Naive thymus-derived CD4-positive, alpha-beta T cell (primary cell): ENCODE measurements at regions of chr7 and their contacts with region 1.

Region 1: DNA sequence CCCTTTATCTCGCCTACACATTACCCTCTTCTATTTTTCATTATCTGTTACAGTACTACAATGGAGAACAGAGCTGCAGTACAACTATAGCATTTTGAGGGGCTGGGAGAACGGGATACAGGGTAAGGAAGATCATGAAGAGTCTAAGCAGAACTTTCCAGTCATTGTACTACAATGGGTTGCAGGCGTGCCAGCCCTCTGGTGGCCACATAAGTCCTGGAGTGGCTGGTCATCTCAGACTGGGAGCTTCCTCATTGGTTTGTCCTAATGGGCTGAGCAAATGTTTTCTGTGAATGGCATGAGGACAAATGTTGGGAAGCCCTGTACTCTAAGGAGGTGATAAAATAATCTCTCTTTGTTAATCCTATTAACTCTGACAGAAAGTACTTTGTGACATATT is 33.0 kb downstream of the TMEM106B start:
- DNase-seq: no peak
- ATAC-seq: no peak
- H3K4me3 ChIP-seq: no peak overlapping the region
- H3K4me3 Mint-ChIP-seq: no peak overlapping the region
- H3K27ac ChIP-seq: no peak overlapping the region
- H3K27ac Mint-ChIP-seq: no peak overlapping the region
- H3K4me1 ChIP-seq: no peaks in the 10 kb centered on the region
- H3K4me1 Mint-ChIP-seq: peaks cover 8 to 18% (median 15%) of the 10 kb centered on the region in 7 donors
- H3K27me3 ChIP-seq: no peaks in the 10 kb centered on the region
- H3K27me3 Mint-ChIP-seq: peaks cover 0 to 3% (median 0%) of the 10 kb centered on the region in 5 donors

Region 2: GRCh38 chr7:12119620-12120303 is 124.4 kb before region 1 on chr7:
- CTCF ChIA-PET with region 1: no interaction called
- POLR2A ChIA-PET with region 1: no interaction called
- intact Hi-C with region 1: no loop called
- DNase-seq: no peak
- ATAC-seq: no peak
- H3K4me3 ChIP-seq: no peak overlapping the region
- H3K4me3 Mint-ChIP-seq: no peak overlapping the region
- H3K27ac ChIP-seq: no peak overlapping the region
- H3K27ac Mint-ChIP-seq: no peak overlapping the region
- H3K4me1 ChIP-seq: no peaks in the 10 kb centered on the region
- H3K4me1 Mint-ChIP-seq: peaks cover 0 to 5% (median 0%) of the 10 kb centered on the region in 7 donors
- H3K27me3 ChIP-seq: no peaks in the 10 kb centered on the region
- H3K27me3 Mint-ChIP-seq: peaks cover 0 to 16% (median 2%) of the 10 kb centered on the region in 5 donors

Region 3: GRCh38 chr7:12152196-12152918 is 91.8 kb before region 1 on chr7:
- CTCF ChIA-PET with region 1: no interaction called
- POLR2A ChIA-PET with region 1: no interaction called
- intact Hi-C with region 1: no loop called
- DNase-seq: no peak
- ATAC-seq: no peak
- H3K4me3 ChIP-seq: no peak overlapping the region
- H3K4me3 Mint-ChIP-seq: no peak overlapping the region
- H3K27ac ChIP-seq: no peak overlapping the region
- H3K27ac Mint-ChIP-seq: no peak overlapping the region
- H3K4me1 ChIP-seq: no peaks in the 10 kb centered on the region
- H3K4me1 Mint-ChIP-seq: peaks cover 0 to 8% (median 6%) of the 10 kb centered on the region in 7 donors
- H3K27me3 ChIP-seq: peaks cover 0 to 3% of the 10 kb centered on the region in 2 donors
- H3K27me3 Mint-ChIP-seq: peaks cover 0 to 14% (median 7%) of the 10 kb centered on the region in 5 donors

Region 4: DNA sequence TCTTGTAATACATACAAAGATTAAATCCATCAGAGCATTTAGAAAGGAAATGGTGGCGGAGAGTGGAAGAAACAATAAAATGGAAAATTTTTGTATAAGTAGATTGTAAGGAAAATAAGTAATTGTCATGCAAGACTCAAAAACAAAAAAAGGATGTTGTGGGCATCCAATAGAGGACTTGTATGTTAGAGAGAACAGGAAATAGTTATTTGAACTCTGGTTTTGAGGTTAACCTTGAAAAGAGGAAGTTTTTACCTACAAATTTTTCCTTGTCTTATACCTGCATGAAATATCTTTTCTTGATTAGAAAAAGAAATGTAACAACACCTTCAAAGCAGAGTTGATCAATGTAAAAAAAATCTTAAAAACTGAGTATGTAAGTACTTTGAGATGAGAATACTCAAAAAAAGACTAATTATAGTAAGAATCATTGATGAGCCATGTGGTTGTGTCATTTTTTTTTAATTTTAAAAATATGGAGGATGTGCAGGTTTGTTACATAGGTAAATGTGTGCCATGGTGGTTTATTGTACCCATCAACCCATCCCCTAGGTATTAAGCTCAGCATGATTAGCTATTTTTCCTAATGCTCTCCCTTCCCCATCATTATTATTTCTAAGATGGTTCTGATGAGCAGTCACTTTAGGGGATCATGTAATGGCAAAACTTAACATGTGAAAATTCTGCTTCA is 21.1 kb before region 1 on chr7:
- CTCF ChIA-PET with region 1: no interaction called
- POLR2A ChIA-PET with region 1: no interaction called
- intact Hi-C with region 1: loop called in 1 of 2 experiments (anchors 2 kb)
- DNase-seq: peak in 7 of 9 donors; percentile 41 to 72 (median 61)
- ATAC-seq: peak; percentile 87
- H3K4me3 ChIP-seq: no peak overlapping the region
- H3K4me3 Mint-ChIP-seq: peak overlapping the region; percentile 51 to 79 (median 66)
- H3K27ac ChIP-seq: peak overlapping the region; percentile 29
- H3K27ac Mint-ChIP-seq: peak overlapping the region; percentile 64 to 87 (median 84)
- H3K4me1 ChIP-seq: peaks cover 18 to 31% of the 10 kb centered on the region in 2 donors
- H3K4me1 Mint-ChIP-seq: peaks cover 30 to 88% (median 78%) of the 10 kb centered on the region in 7 donors
- H3K27me3 ChIP-seq: no peaks in the 10 kb centered on the region
- H3K27me3 Mint-ChIP-seq: no peaks in the 10 kb centered on the region